CD8-positive, alpha-beta T cell (primary cell): ENCODE measurements at regions of chr2 and their contacts with region 1.

Region 1: GRCh38 chr2:85813982-85814801 is 60.4 kb downstream of the ATOH8 start:
- DNase-seq: peak; percentile 67 to 87 (median 82)
- ATAC-seq: peak; percentile 89
- H3K4me3 ChIP-seq: no peak overlapping the region
- H3K4me3 Mint-ChIP-seq: no peak overlapping the region
- H3K27ac ChIP-seq: no peak overlapping the region
- H3K27ac Mint-ChIP-seq: no peak overlapping the region
- H3K4me1 ChIP-seq: no peaks in the 10 kb centered on the region
- H3K4me1 Mint-ChIP-seq: no peaks in the 10 kb centered on the region
- H3K27me3 ChIP-seq: no peaks in the 10 kb centered on the region
- H3K27me3 Mint-ChIP-seq: peaks cover 12% of the 10 kb centered on the region
- CTCF ChIP-seq: peak; percentile 82

Region 2: GRCh38 chr2:85390941-85391669 is 423.1 kb before region 1 on chr2:
- CTCF ChIA-PET with region 1: no interaction called
- POLR2A ChIA-PET with region 1: no interaction called
- intact Hi-C with region 1: loop called (anchors 2 to 5 kb)
- DNase-seq: peak; percentile 59 to 86 (median 72)
- ATAC-seq: peak; percentile 81
- H3K4me3 ChIP-seq: no peak overlapping the region
- H3K4me3 Mint-ChIP-seq: no peak overlapping the region
- H3K27ac ChIP-seq: no peak overlapping the region
- H3K27ac Mint-ChIP-seq: no peak overlapping the region
- H3K4me1 ChIP-seq: peaks cover 9% of the 10 kb centered on the region
- H3K4me1 Mint-ChIP-seq: peaks cover 4% of the 10 kb centered on the region
- H3K27me3 ChIP-seq: no peaks in the 10 kb centered on the region
- H3K27me3 Mint-ChIP-seq: no peaks in the 10 kb centered on the region
- CTCF ChIP-seq: peak; percentile 49

Region 3: DNA sequence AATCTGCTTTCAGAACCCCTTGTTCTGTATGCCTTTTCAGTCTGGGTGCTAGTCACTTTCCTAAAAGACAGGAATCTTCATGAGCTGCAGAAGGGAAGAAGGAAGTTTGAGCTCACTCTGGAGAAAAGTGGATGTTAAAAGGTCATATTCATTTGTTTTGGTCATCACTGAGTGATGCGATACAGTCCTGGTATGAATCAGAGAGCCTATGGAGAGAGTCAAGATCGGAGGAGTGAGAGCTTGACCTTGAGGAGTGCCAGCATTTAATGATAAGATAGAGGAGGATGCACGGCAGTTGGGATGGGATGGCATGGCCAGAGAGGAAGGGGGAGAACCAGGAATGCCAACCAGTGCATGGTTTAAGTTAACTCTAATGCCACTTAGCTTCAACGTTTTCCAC is 178.6 kb before region 1 on chr2:
- CTCF ChIA-PET with region 1: interaction called, 3 read pairs
- POLR2A ChIA-PET with region 1: no interaction called
- intact Hi-C with region 1: loop called in 1 of 2 experiments (anchors 5 kb)
- DNase-seq: no peak
- ATAC-seq: no peak
- H3K4me3 ChIP-seq: no peak overlapping the region
- H3K4me3 Mint-ChIP-seq: no peak overlapping the region
- H3K27ac ChIP-seq: no peak overlapping the region
- H3K27ac Mint-ChIP-seq: peak overlapping the region; percentile 6
- H3K4me1 ChIP-seq: no peaks in the 10 kb centered on the region
- H3K4me1 Mint-ChIP-seq: peaks cover 21% of the 10 kb centered on the region
- H3K27me3 ChIP-seq: no peaks in the 10 kb centered on the region
- H3K27me3 Mint-ChIP-seq: no peaks in the 10 kb centered on the region
- CTCF ChIP-seq: no peak

Region 4: GRCh38 chr2:85678794-85679672 is 135.2 kb before region 1 on chr2:
- CTCF ChIA-PET with region 1: interaction called, 3 read pairs
- POLR2A ChIA-PET with region 1: no interaction called
- intact Hi-C with region 1: loop called in 1 of 2 experiments (anchors 5 kb)
- DNase-seq: peak; percentile 59 to 85 (median 75)
- ATAC-seq: peak; percentile 98
- H3K4me3 ChIP-seq: peak overlapping the region in 1 of 2 experiments; percentile 19
- H3K4me3 Mint-ChIP-seq: no peak overlapping the region
- H3K27ac ChIP-seq: no peak overlapping the region
- H3K27ac Mint-ChIP-seq: no peak overlapping the region
- H3K4me1 ChIP-seq: peaks cover 7% of the 10 kb centered on the region
- H3K4me1 Mint-ChIP-seq: no peaks in the 10 kb centered on the region
- H3K27me3 ChIP-seq: no peaks in the 10 kb centered on the region
- H3K27me3 Mint-ChIP-seq: peaks cover 2% of the 10 kb centered on the region
- CTCF ChIP-seq: peak; percentile 91

Region 5: GRCh38 chr2:85723707-85724360 is 90.4 kb before region 1 on chr2:
- CTCF ChIA-PET with region 1: interaction called, 71 read pairs
- POLR2A ChIA-PET with region 1: no interaction called
- intact Hi-C with region 1: loop called in 1 of 2 experiments (anchors 1 kb)
- DNase-seq: no peak
- ATAC-seq: no peak
- H3K4me3 ChIP-seq: no peak overlapping the region
- H3K4me3 Mint-ChIP-seq: no peak overlapping the region
- H3K27ac ChIP-seq: no peak overlapping the region
- H3K27ac Mint-ChIP-seq: no peak overlapping the region
- H3K4me1 ChIP-seq: peaks cover 2% of the 10 kb centered on the region
- H3K4me1 Mint-ChIP-seq: peaks cover 2% of the 10 kb centered on the region
- H3K27me3 ChIP-seq: no peaks in the 10 kb centered on the region
- H3K27me3 Mint-ChIP-seq: no peaks in the 10 kb centered on the region
- CTCF ChIP-seq: no peak

Region 6: DNA sequence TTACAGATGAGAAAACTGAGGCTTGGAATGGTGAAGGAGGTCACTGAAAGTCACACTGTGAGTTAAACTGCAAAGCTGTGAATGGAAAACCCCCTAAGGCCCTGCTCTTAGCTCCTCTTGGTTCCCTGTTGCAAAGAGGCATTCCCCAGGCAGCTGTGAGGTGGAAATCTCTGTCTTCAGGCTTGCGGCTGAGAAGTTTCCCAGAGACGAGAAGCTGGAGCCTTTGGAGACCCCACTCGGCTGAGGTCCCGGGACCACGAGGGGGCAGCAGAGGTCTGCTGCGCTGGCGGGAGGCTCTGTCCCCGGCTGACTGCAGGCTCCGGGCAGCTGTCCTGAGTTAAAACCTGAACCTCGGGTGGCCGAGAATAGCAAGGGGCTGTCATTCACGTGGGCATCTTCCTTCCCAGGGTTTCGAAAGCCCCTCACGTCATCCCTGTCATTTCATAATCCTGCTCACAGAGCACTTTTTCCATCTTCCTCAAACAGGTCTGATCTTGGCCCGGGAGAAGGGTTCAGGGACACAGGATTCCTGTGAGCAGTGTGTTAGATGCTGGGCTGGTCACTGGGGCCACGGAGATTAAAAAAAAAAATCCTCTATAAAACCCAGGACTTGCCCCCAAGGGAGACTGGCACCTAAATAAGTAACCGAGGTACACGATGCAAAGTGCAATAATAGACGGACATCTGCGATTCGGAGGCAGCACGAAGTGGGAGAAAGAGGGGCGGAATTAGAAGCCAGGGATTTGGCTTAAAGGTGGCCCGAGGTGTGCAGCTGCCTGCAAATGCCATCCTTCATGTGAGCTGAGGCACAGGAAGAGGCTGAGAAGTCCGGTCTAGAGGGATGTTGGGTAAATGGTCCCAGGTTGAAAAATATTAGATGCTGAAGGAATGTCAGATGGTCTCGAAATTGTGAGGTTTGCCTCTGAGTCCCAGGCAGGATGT is 85.0 kb before region 1 on chr2:
- CTCF ChIA-PET with region 1: interaction called, 71 read pairs
- POLR2A ChIA-PET with region 1: no interaction called
- intact Hi-C with region 1: loop called in 1 of 2 experiments (anchors 1 kb)
- DNase-seq: peak; percentile 48 to 82 (median 73)
- ATAC-seq: peak; percentile 84
- H3K4me3 ChIP-seq: no peak overlapping the region
- H3K4me3 Mint-ChIP-seq: no peak overlapping the region
- H3K27ac ChIP-seq: no peak overlapping the region
- H3K27ac Mint-ChIP-seq: no peak overlapping the region
- H3K4me1 ChIP-seq: peaks cover 5% of the 10 kb centered on the region
- H3K4me1 Mint-ChIP-seq: peaks cover 2% of the 10 kb centered on the region
- H3K27me3 ChIP-seq: peaks cover 0 to 2% of the 10 kb centered on the region in 2 experiments
- H3K27me3 Mint-ChIP-seq: no peaks in the 10 kb centered on the region
- CTCF ChIP-seq: peak; percentile 78

Region 7: GRCh38 chr2:85750587-85751575 is 63.3 kb before region 1 on chr2:
- CTCF ChIA-PET with region 1: interaction called, 63 read pairs
- POLR2A ChIA-PET with region 1: no interaction called
- intact Hi-C with region 1: loop called in 1 of 2 experiments (anchors 1 kb)
- DNase-seq: peak; percentile 16 to 69 (median 57)
- ATAC-seq: peak; percentile 58
- H3K4me3 ChIP-seq: no peak overlapping the region
- H3K4me3 Mint-ChIP-seq: no peak overlapping the region
- H3K27ac ChIP-seq: no peak overlapping the region
- H3K27ac Mint-ChIP-seq: no peak overlapping the region
- H3K4me1 ChIP-seq: peaks cover 18% of the 10 kb centered on the region
- H3K4me1 Mint-ChIP-seq: peaks cover 25% of the 10 kb centered on the region
- H3K27me3 ChIP-seq: peaks cover 17 to 18% of the 10 kb centered on the region in 2 experiments
- H3K27me3 Mint-ChIP-seq: peaks cover 50% of the 10 kb centered on the region
- CTCF ChIP-seq: peak; percentile 66

Region 8: GRCh38 chr2:86221066-86221684 is 407.0 kb after region 1 on chr2:
- CTCF ChIA-PET with region 1: no interaction called
- POLR2A ChIA-PET with region 1: no interaction called
- intact Hi-C with region 1: no loop called
- DNase-seq: peak in 8 of 9 experiments; percentile 18 to 69 (median 38)
- ATAC-seq: peak; percentile 74
- H3K4me3 ChIP-seq: no peak overlapping the region
- H3K4me3 Mint-ChIP-seq: no peak overlapping the region
- H3K27ac ChIP-seq: no peak overlapping the region
- H3K27ac Mint-ChIP-seq: no peak overlapping the region
- H3K4me1 ChIP-seq: peaks cover 4% of the 10 kb centered on the region
- H3K4me1 Mint-ChIP-seq: peaks cover 9% of the 10 kb centered on the region
- H3K27me3 ChIP-seq: no peaks in the 10 kb centered on the region
- H3K27me3 Mint-ChIP-seq: no peaks in the 10 kb centered on the region
- CTCF ChIP-seq: peak; percentile 72